B cell (primary cell): ENCODE measurements at regions of chr4 and their contacts with region 1.

Region 1: GRCh38 chr4:3480528-3481112 is 17.5 kb downstream of the DOK7 start:
- DNase-seq: peak; percentile 80
- ATAC-seq: peak; percentile 25
- H3K4me3 ChIP-seq: no peak overlapping the region
- H3K4me3 Mint-ChIP-seq: peak overlapping the region; percentile 29
- H3K27ac ChIP-seq: no peak overlapping the region
- H3K27ac Mint-ChIP-seq: peak overlapping the region; percentile 20
- H3K4me1 ChIP-seq: peaks cover 36 to 55% of the 10 kb centered on the region in 2 donors
- H3K4me1 Mint-ChIP-seq: peaks cover 43% of the 10 kb centered on the region
- H3K27me3 ChIP-seq: peaks cover 0 to 5% (median 1%) of the 10 kb centered on the region in 4 experiments
- H3K27me3 Mint-ChIP-seq: no peaks in the 10 kb centered on the region
- CTCF ChIP-seq: peak; percentile 99

Region 2: DNA sequence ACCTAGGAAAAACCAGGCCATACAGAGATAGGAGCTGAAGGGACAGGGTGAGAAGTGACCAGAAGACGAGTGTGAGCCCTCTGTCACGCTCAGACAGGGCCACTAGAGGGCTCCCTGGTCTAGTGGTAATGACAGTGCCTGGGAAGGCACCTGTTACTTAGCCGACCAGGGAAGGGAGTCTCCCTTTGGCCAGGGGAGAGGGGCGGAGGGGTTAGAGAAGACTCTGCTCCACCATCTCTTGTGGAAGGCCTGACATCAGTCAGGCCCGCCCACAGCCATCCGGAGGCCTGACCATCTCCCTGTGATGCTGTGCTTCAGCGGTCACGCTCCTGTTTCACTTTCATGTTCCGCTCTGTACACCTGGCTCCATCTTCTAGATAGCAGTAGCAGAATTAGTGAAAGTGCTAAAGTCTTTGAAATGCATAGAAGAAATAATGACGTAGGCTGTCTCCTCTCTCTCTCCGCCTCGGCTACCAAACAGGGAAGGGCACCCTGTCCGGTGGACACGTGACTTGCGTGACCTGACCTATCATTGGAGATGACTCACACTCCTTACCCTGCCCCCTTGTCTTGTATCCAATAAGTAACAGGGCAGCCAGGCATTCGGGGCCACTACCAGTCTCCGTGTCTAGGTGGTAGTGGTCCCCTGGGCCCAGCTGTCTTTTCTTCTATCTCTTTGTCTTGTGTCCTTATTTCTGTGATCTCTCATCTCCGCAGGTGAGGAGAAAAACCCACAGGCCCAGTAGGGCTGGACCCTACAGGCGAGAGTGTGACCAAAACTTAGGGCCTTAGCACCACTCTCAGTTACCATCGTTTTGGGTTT is 432.9 kb before region 1 on chr4:
- CTCF ChIA-PET with region 1: no interaction called
- POLR2A ChIA-PET with region 1: no interaction called
- intact Hi-C with region 1: loop called (anchors 10 kb)
- DNase-seq: peak; percentile 95
- ATAC-seq: peak; percentile 92
- H3K4me3 ChIP-seq: peak overlapping the region in 2 of 5 experiments; percentile 6 to 30
- H3K4me3 Mint-ChIP-seq: peak overlapping the region; percentile 71
- H3K27ac ChIP-seq: peak overlapping the region; percentile 92 to 97
- H3K27ac Mint-ChIP-seq: peak overlapping the region; percentile 91
- H3K4me1 ChIP-seq: peaks cover 42 to 61% of the 10 kb centered on the region in 2 donors
- H3K4me1 Mint-ChIP-seq: peaks cover 44% of the 10 kb centered on the region
- H3K27me3 ChIP-seq: no peaks in the 10 kb centered on the region
- H3K27me3 Mint-ChIP-seq: no peaks in the 10 kb centered on the region
- CTCF ChIP-seq: peak; percentile 78

Region 3: DNA sequence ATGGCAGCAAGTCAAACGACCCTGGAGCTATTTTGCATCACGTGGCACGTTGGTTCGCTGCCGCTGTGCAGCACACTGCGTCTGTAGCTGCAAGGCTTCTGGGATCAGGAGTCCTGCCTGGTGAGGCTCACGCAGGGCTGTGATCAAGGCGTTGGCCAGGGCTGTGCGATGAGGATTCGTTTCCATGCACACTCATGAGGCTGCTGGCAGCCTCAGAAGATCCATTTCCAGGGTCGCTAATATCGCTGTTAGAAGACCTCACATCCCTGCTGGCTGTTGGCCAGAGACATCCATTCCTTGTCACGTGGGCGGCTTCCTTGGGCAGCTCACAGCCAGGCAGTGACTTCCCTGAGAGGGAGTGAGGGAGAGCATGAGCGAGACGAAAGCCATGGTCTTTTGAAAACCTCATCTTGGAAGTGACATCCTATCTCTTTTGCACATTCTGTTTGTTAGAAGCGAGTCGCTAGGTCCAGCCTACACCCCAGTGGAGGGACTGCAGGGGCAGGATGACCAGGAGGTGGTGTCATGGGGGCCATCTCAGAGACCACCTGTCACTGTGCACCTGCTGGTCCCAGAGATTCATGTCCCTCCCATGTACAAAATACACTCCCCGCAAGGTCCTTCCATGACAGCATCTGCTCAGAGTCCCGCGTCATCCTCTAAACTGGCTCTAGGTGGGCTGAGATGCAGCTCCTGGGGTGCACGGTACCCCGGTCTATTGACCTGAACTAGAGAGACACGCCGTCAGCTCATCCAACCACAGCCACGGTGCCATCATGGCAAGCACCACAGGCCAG is 175.6 kb before region 1 on chr4:
- CTCF ChIA-PET with region 1: no interaction called
- POLR2A ChIA-PET with region 1: no interaction called
- intact Hi-C with region 1: loop called (anchors 5 kb)
- DNase-seq: no peak
- ATAC-seq: no peak
- H3K4me3 ChIP-seq: no peak overlapping the region
- H3K4me3 Mint-ChIP-seq: no peak overlapping the region
- H3K27ac ChIP-seq: no peak overlapping the region
- H3K27ac Mint-ChIP-seq: no peak overlapping the region
- H3K4me1 ChIP-seq: peaks cover 27 to 39% of the 10 kb centered on the region in 2 donors
- H3K4me1 Mint-ChIP-seq: peaks cover 46% of the 10 kb centered on the region
- H3K27me3 ChIP-seq: no peaks in the 10 kb centered on the region
- H3K27me3 Mint-ChIP-seq: no peaks in the 10 kb centered on the region
- CTCF ChIP-seq: no peak

Region 4: DNA sequence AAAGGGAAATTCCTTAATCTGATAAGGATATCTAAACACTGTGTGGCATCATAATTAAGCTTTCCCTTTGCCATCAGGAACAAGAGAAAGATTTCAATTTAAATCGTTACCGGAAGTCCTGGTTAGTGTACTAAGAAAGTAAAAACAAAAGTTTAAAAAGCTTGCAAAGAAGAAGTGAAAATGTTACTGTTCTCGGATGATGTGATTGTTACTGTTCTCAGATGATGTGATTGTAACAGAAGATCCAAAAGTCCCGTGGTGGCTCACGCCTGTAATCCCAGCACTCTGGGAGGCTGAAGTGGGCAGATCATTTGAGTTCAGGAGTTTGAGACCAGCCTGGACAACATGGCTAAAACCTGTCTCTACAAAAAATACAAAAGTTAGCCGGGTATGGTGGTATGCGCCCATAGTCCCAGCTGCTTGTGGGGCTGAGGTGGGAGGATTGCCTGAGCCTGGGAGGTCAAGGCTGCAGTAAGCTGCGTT is 125.3 kb before region 1 on chr4:
- CTCF ChIA-PET with region 1: interaction called, 11 read pairs
- POLR2A ChIA-PET with region 1: no interaction called
- intact Hi-C with region 1: no loop called
- DNase-seq: peak; percentile 63
- ATAC-seq: peak; percentile 66
- H3K4me3 ChIP-seq: peak overlapping the region in 2 of 5 experiments; percentile 25 to 47
- H3K4me3 Mint-ChIP-seq: peak overlapping the region; percentile 75
- H3K27ac ChIP-seq: peak overlapping the region; percentile 72 to 79
- H3K27ac Mint-ChIP-seq: peak overlapping the region; percentile 94
- H3K4me1 ChIP-seq: peaks cover 0 to 8% of the 10 kb centered on the region in 2 donors
- H3K4me1 Mint-ChIP-seq: peaks cover 35% of the 10 kb centered on the region
- H3K27me3 ChIP-seq: no peaks in the 10 kb centered on the region
- H3K27me3 Mint-ChIP-seq: no peaks in the 10 kb centered on the region
- CTCF ChIP-seq: no peak

Region 5: DNA sequence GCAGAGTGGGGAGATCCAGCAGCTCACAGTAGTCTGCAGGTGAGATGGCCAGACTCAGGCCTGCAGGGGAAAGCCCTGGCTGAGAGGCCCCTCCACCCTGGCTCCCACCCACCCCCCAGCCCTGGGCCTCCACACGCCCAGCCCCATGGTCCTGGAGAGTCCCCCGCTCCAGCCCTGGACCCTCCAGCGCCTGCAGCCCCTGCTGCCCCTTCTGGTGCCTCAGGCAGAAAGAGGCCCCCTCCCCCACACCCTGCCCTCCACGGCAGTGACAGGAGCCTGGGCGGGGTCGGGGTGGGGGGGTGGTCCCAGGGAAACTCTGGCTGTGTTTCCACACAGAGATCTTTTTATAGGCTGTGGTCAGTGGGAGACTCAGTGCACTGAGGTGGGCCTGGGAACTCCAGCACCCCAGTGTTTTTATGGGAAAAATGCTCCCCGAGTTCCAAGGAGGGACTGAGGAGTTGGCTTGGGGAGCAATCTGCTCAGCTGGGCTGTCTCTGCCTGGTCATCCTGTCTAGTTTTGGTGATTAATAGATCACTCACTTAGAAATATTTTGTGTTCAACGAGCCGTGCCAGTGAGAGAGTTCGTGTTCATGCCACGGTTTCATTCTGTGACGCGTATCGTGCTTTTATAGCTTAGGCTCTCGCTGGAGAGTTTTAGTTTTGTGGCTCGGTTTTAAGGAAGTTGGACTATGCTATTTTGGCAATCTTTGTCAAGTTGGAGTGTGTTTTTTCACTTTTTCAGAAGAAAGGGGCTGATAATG is 92.0 kb before region 1 on chr4:
- CTCF ChIA-PET with region 1: interaction called, 4 read pairs
- POLR2A ChIA-PET with region 1: no interaction called
- intact Hi-C with region 1: loop called (anchors 5 kb)
- DNase-seq: peak; percentile 75
- ATAC-seq: peak; percentile 67
- H3K4me3 ChIP-seq: peak overlapping the region in 4 of 5 experiments; percentile 13 to 58 (median 34)
- H3K4me3 Mint-ChIP-seq: peak overlapping the region; percentile 94
- H3K27ac ChIP-seq: peak overlapping the region; percentile 17 to 45
- H3K27ac Mint-ChIP-seq: peak overlapping the region; percentile 88
- H3K4me1 ChIP-seq: peaks cover 37 to 52% of the 10 kb centered on the region in 2 donors
- H3K4me1 Mint-ChIP-seq: peaks cover 48% of the 10 kb centered on the region
- H3K27me3 ChIP-seq: peaks cover 0 to 17% (median 3%) of the 10 kb centered on the region in 4 experiments
- H3K27me3 Mint-ChIP-seq: peaks cover 5% of the 10 kb centered on the region
- CTCF ChIP-seq: no peak

Region 6: DNA sequence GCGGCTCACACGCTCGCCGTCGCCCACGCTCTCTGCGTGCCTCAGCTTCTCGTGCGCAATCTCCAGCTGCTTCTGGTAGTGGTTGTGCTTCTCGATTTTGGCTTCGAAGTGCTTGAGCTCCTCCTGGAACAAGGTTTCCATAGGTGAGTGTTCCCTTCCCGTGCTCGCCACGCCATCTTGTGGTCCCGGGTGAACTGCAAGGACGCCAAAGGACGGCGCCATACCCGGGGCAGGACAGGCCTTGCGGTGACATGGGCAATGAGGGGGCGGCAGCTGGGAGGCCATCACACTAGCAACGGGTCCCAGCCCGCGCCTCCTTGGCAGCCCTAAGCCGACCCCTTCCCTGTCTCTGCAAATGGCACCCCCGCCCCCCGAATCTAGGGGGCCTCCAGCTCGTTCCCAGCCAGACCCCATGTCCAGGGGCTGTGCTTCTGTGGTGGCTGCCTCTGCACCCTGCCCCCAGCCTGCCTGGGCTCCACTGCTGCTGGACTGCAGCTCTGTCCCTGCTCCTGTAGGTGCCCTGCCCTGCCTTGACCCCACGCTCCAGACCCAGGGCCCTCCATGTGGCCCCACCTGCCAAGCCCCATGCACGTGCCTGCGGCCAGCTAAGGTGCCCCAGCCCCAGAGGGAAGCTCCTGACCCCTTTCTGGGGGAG is 34.3 kb after region 1 on chr4:
- CTCF ChIA-PET with region 1: interaction called, 17 read pairs
- POLR2A ChIA-PET with region 1: no interaction called
- intact Hi-C with region 1: no loop called
- DNase-seq: no peak
- ATAC-seq: peak; percentile 17
- H3K4me3 ChIP-seq: no peak overlapping the region
- H3K4me3 Mint-ChIP-seq: no peak overlapping the region
- H3K27ac ChIP-seq: no peak overlapping the region
- H3K27ac Mint-ChIP-seq: no peak overlapping the region
- H3K4me1 ChIP-seq: no peaks in the 10 kb centered on the region
- H3K4me1 Mint-ChIP-seq: no peaks in the 10 kb centered on the region
- H3K27me3 ChIP-seq: no peaks in the 10 kb centered on the region
- H3K27me3 Mint-ChIP-seq: no peaks in the 10 kb centered on the region
- CTCF ChIP-seq: peak; percentile 12

Region 7: GRCh38 chr4:3599951-3600350 is 119.3 kb after region 1 on chr4:
- CTCF ChIA-PET with region 1: no interaction called
- POLR2A ChIA-PET with region 1: no interaction called
- intact Hi-C with region 1: no loop called
- DNase-seq: no peak
- ATAC-seq: no peak
- H3K4me3 ChIP-seq: no peak overlapping the region
- H3K4me3 Mint-ChIP-seq: no peak overlapping the region
- H3K27ac ChIP-seq: no peak overlapping the region
- H3K27ac Mint-ChIP-seq: no peak overlapping the region
- H3K4me1 ChIP-seq: no peaks in the 10 kb centered on the region
- H3K4me1 Mint-ChIP-seq: no peaks in the 10 kb centered on the region
- H3K27me3 ChIP-seq: peaks cover 0 to 8% (median 0%) of the 10 kb centered on the region in 4 experiments
- H3K27me3 Mint-ChIP-seq: peaks cover 7% of the 10 kb centered on the region
- CTCF ChIP-seq: no peak

Region 8: DNA sequence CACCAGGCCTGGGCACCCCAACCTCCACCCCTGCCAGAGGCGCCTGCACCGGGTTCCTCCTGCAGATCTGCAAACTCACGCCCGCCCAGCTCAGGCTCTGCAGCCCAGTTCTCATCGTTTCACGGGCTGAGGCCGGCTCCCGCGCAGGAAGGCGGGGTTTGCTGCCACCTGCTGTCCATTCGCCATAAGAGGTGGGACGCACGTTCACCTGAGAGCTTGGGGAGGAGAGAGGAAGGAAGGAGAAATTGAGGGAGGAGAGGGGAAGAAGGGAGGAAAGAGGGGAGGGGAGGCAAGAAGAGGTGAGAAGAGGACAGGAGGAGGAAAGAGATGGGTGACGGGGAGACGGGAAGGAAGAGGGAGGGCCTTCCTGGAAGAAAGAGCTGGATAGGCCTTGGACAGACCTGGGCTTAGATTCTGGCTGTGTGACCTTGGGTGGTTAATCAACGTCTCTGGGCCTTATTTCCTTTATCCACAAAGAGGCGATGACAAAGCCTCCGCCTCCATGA is 400.0 kb after region 1 on chr4:
- CTCF ChIA-PET with region 1: interaction called, 12 read pairs
- POLR2A ChIA-PET with region 1: no interaction called
- intact Hi-C with region 1: no loop called
- DNase-seq: peak; percentile 78
- ATAC-seq: peak; percentile 87
- H3K4me3 ChIP-seq: peak overlapping the region in 3 of 5 experiments; percentile 2 to 42 (median 25)
- H3K4me3 Mint-ChIP-seq: peak overlapping the region; percentile 61
- H3K27ac ChIP-seq: no peak overlapping the region
- H3K27ac Mint-ChIP-seq: no peak overlapping the region
- H3K4me1 ChIP-seq: peaks cover 14 to 18% of the 10 kb centered on the region in 2 donors
- H3K4me1 Mint-ChIP-seq: peaks cover 17% of the 10 kb centered on the region
- H3K27me3 ChIP-seq: peaks cover 0 to 25% (median 9%) of the 10 kb centered on the region in 4 experiments
- H3K27me3 Mint-ChIP-seq: peaks cover 43% of the 10 kb centered on the region
- CTCF ChIP-seq: peak; percentile 69